WTC11 (cell line): ENCODE measurements at regions of chr3 and their contacts with region 1.

Region 1: GRCh38 chr3:151067158-151067557 is 18.3 kb upstream of the MED12L start:
- DNase-seq: no peak
- ATAC-seq: peak; percentile 96
- H3K4me3 Mint-ChIP-seq: no peak overlapping the region
- H3K27ac Mint-ChIP-seq: no peak overlapping the region
- H3K4me1 Mint-ChIP-seq: no peaks in the 10 kb centered on the region
- H3K27me3 Mint-ChIP-seq: no peaks in the 10 kb centered on the region
- CTCF ChIP-seq: peak; percentile 29

Region 2: GRCh38 chr3:151086484-151087456 is 19.6 kb after region 1 on chr3:
- CTCF ChIA-PET with region 1: interaction called, 19 read pairs
- POLR2A ChIA-PET with region 1: interaction called, 5 read pairs
- DNase-seq: peak; percentile 77
- ATAC-seq: peak; percentile 60
- H3K4me3 Mint-ChIP-seq: peak overlapping the region; percentile 94
- H3K27ac Mint-ChIP-seq: peak overlapping the region; percentile 84
- H3K4me1 Mint-ChIP-seq: peaks cover 58% of the 10 kb centered on the region
- H3K27me3 Mint-ChIP-seq: peaks cover 20% of the 10 kb centered on the region
- CTCF ChIP-seq: 0 out of 2 replicates have a peak, but pooled peaks have one; percentile 20